Mucosa of descending colon (tissue), 3 donors: ENCODE measurements at regions of chr21 and their contacts with region 1.

Region 1: GRCh38 chr21:38805328-38806152 is at the start of gene ETS2:
- DNase-seq: peak; percentile 91 to 95 (median 94)
- ATAC-seq: peak; percentile 80
- H3K4me3 ChIP-seq: peak within 1 kb of the TSS; percentile 85
- H3K4me1 ChIP-seq: peaks cover 6% of the 10 kb centered on the region
- CTCF ChIP-seq: no peak
- total RNA-seq, gene ETS2: 115 to 222 (median 171) TPM

Region 2: GRCh38 chr21:38743761-38744529 is 61.6 kb before region 1 on chr21:
- intact Hi-C with region 1: loop called in 1 of 2 experiments (anchors 10 kb)
- DNase-seq: no peak
- ATAC-seq: no peak
- H3K4me3 ChIP-seq: no peak overlapping the region
- H3K4me1 ChIP-seq: peaks cover 18% of the 10 kb centered on the region
- CTCF ChIP-seq: no peak

Region 3: DNA sequence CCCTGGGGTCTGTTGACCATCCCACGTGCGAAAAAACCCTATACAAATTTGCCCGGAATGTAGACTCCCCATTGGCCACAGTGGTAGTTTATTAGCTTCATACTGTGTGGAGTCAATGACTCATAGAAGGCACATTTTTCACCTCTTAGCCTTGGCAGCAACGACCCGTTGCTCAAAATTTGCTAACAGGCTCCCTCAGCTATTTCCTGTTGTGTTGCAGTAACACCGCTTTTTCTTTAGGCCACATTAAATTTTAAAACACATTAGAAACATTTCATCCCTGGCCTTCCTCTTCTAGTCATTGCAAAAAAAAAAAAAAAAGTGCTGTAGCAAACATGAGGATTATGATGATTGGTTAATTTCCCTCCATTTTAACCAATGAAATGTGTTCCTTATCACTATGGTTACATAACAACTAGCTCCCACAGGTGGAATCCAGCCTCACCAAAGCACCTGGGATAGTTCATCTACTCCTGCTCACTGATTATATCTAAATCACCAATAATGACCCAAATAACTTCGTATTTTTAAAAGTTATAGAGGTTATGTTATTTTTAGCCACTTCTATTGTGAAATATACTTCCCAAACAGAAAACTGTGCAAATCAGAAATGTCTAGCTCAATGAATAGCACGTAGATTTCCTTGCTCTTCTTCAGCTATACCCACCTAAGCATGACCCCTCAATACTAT is 49.7 kb before region 1 on chr21:
- intact Hi-C with region 1: loop called in 1 of 2 experiments (anchors 10 kb)
- DNase-seq: no peak
- ATAC-seq: peak; percentile 84
- H3K4me3 ChIP-seq: no peak overlapping the region
- H3K4me1 ChIP-seq: no peaks in the 10 kb centered on the region
- CTCF ChIP-seq: no peak

Region 4: GRCh38 chr21:38903690-38904139 is 98.2 kb after region 1 on chr21:
- intact Hi-C with region 1: no loop called
- DNase-seq: peak in 1 of 3 donors; percentile 9
- ATAC-seq: no peak
- H3K4me3 ChIP-seq: no peak overlapping the region
- H3K4me1 ChIP-seq: peaks cover 7% of the 10 kb centered on the region
- CTCF ChIP-seq: no peak

Region 5: GRCh38 chr21:39125752-39126485 is 320.4 kb after region 1 on chr21:
- intact Hi-C with region 1: loop called in 1 of 2 experiments (anchors 10 kb)
- DNase-seq: peak; percentile 53 to 72 (median 62)
- ATAC-seq: peak; percentile 96
- H3K4me3 ChIP-seq: no peak overlapping the region
- H3K4me1 ChIP-seq: no peaks in the 10 kb centered on the region
- CTCF ChIP-seq: peak; percentile 26